ENCODE measurements at regions of chr4 and their contacts with region 1.

Region 1: GRCh38 chr4:36414248-36414647 is 132.8 kb downstream of the DTHD1 start:
- DNase-seq: no peak
- ATAC-seq: no peak
- H3K4me3 ChIP-seq: no peak overlapping the region
- H3K27ac ChIP-seq: no peak overlapping the region
- H3K4me1 ChIP-seq: peaks cover 0 to 3% (median 0%) of the 10 kb centered on the region in 3 donors
- H3K27me3 ChIP-seq: peaks cover 0 to 9% (median 3%) of the 10 kb centered on the region in 4 donors
- CTCF ChIP-seq: peak in 1 of 4 donors; percentile 9

Region 2: GRCh38 chr4:37389967-37390580 is 975.8 kb after region 1 on chr4:
- intact Hi-C with region 1: loop called in 1 of 3 experiments (anchors 10 kb)
- DNase-seq: peak in 2 of 6 donors; percentile 6 to 32
- ATAC-seq: peak; percentile 72 to 87 (median 84)
- H3K4me3 ChIP-seq: no peak overlapping the region
- H3K27ac ChIP-seq: no peak overlapping the region
- H3K4me1 ChIP-seq: peaks cover 0 to 3% (median 0%) of the 10 kb centered on the region in 3 donors
- H3K27me3 ChIP-seq: no peaks in the 10 kb centered on the region
- CTCF ChIP-seq: peak; percentile 45 to 75 (median 68)